PC-9 (cell line): ENCODE measurements at regions of chrX and their contacts with region 1.

Region 1: DNA sequence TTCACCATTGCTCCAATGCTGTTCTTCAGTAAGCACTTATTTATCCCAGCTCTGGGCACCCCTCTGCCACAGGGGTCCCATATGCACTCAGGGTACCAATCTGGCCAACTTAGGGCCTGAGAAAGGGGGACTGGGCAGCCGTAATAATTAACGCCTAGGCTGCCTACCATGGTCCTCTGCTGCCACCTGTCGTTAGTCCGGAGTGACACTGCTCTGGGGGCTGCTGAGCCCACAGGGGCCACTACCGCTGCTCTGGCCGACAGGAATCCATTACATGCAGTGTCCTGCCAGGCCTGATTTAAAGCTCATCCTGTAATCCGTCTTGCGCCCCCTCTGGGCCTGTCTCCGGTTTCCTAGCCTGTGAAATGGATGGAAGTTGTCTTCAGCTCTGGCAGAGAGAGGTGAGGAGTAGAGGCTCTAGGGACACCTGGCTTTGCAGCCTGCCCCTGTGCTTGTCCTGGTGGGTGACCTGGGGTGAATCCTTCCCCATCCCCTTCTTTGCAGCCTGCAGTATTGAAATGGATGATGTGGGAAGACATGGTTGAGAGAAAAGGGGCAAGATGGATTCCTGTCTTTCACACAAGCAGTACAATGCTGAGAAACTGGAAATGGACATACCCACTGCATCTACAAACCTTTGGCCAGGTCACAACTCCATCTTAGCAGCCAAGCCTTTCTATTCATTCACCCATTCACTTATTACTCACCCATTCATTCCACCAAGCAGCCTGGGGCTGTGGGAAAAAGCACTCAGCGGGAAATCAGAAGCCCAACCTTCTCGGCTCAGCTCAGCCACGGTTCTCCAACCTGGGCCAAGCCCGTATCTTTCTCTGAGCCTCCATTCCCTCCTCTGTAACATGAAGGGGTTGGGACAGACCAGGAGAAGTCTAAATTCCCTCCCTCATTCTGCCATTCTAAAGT is 116.3 kb upstream of the NALF2 start:
- DNase-seq: peak in 1 of 2 experiments; percentile 32
- H3K4me3 ChIP-seq: no peak overlapping the region
- H3K27ac ChIP-seq: no peak overlapping the region
- H3K4me1 ChIP-seq: no peaks in the 10 kb centered on the region
- H3K27me3 ChIP-seq: peaks cover 5% of the 10 kb centered on the region; the same call in 1 of the 2 replicates
- CTCF ChIP-seq: peak; percentile 79

Region 2: GRCh38 chrX:68732906-68733493 is 654.8 kb before region 1 on chrX:
- CTCF ChIA-PET with region 1: no interaction called
- POLR2A ChIA-PET with region 1: no interaction called
- intact Hi-C with region 1: loop called (anchors 5 kb)
- DNase-seq: peak in 1 of 2 experiments; percentile 54
- H3K4me3 ChIP-seq: no peak overlapping the region
- H3K27ac ChIP-seq: no peak overlapping the region
- H3K4me1 ChIP-seq: no peaks in the 10 kb centered on the region
- H3K27me3 ChIP-seq: peaks cover 11% of the 10 kb centered on the region
- CTCF ChIP-seq: peak; percentile 66

Region 3: GRCh38 chrX:68822641-68823410 is 565.0 kb before region 1 on chrX:
- CTCF ChIA-PET with region 1: no interaction called
- POLR2A ChIA-PET with region 1: no interaction called
- intact Hi-C with region 1: loop called (anchors 1 kb)
- DNase-seq: no peak
- H3K4me3 ChIP-seq: no peak overlapping the region
- H3K27ac ChIP-seq: no peak overlapping the region
- H3K4me1 ChIP-seq: no peaks in the 10 kb centered on the region
- H3K27me3 ChIP-seq: no peaks in the 10 kb centered on the region
- CTCF ChIP-seq: peak; percentile 54

Region 4: DNA sequence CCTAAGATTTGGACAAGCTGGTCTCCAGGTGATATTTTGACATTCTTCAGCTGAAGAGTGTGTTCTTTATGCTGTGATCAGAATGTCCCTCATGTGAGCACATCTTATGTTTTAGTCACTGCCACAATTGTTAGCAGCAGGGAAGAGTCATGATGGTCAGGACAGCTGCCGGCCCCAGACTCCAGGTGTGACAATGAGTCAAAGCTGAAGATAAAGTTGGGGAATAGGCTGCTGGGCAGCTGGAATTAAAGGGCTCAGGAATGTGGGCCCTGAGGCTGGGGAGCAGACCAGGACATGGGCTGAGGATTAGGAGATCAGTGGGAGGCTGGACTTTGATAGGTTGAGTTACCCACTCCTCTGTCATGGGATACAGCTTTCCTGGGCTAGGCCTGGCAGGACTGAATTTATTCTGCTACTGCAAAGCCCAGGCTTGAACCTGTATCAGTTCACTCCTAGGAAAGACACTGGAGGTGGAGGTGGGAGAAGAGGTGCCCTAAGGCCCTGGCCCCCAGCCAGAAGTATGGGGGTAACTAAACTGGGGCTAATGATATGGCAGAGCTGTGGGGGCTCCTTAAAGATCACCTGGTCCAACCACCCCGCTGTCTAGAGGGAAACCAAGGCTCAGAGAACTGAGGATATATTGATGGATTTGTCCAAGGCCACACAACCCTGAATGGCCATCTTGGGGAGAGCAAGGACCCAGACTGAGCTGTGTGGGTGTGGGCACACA is 342.0 kb before region 1 on chrX:
- CTCF ChIA-PET with region 1: no interaction called
- POLR2A ChIA-PET with region 1: no interaction called
- intact Hi-C with region 1: no loop called
- DNase-seq: no peak
- H3K4me3 ChIP-seq: no peak overlapping the region
- H3K27ac ChIP-seq: no peak overlapping the region
- H3K4me1 ChIP-seq: no peaks in the 10 kb centered on the region
- H3K27me3 ChIP-seq: no peaks in the 10 kb centered on the region
- CTCF ChIP-seq: no peak